Cardiac septum (tissue), 1 donor: ENCODE measurements at regions of chr13 and their contacts with region 1.

Region 1: GRCh38 chr13:101785858-101786257 is 333.4 kb downstream of the ITGBL1 start:
- DNase-seq: no peak

Region 2: DNA sequence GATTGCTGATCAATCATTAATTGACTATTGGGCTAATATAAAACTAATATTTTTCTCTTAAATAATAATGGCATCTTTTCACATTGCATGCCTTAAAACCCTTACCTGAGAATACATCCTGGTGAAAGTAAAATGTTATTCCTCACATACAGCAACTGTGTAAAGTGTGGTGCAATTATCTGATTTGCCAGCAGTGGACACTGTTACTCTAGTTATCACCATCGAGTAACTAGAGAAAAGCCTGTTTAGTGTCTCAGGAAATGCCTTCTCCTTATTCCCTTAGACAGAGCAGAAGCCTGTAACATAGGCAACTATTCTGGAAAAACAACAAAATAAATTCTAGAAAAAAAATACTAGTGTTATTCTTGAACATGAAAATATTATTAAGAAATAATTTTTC is 156.2 kb after region 1 on chr13:
- intact Hi-C with region 1: no loop called
- DNase-seq: no peak

Region 3: DNA sequence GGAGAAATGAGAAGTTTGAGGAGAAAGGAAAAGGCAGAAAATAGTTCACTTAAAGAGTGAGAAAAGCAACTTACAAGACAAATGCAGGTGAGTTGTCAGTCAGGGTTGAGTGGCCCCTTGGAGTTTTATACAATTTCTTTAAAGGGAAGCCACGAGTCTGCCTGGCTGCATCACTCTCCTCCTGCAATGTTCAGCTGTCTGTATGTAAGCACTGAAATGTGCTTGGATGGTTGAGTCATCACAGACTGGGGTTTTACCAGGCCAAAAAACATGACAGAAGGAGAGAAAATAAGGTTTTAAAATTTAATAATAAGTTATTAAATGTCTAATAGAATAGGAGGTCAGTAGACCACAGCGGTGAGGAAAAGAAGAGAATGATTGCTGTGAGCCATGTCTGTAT is 667.0 kb after region 1 on chr13:
- intact Hi-C with region 1: loop called (anchors 10 kb)
- DNase-seq: no peak